CD8-positive, alpha-beta T cell (primary cell): ENCODE measurements at regions of chr4 and their contacts with region 1.

Region 1: DNA sequence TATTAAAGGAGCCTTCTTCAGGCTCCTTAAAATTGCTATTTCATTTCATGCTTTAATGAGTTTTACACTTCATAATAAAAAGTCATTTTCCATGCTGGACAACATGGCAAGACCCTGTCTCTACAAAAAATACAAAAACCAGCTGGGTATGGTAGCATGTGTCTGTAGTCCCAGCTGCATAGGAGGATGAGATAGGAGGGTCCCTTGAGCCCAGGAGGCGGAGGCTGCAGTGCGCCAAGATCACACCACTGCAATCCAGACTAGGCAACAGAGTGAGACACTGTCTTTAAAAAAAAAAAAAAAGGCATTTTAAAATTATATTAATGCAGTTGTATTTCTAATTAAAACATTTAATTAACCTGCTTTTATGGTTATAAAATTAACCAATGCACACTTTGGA is 49.2 kb downstream of the PDS5A start:
- DNase-seq: no peak
- ATAC-seq: no peak
- H3K4me3 ChIP-seq: no peak overlapping the region
- H3K4me3 Mint-ChIP-seq: no peak overlapping the region
- H3K27ac ChIP-seq: no peak overlapping the region
- H3K27ac Mint-ChIP-seq: no peak overlapping the region
- H3K4me1 ChIP-seq: peaks cover 9% of the 10 kb centered on the region
- H3K4me1 Mint-ChIP-seq: peaks cover 46% of the 10 kb centered on the region
- H3K27me3 ChIP-seq: no peaks in the 10 kb centered on the region
- H3K27me3 Mint-ChIP-seq: no peaks in the 10 kb centered on the region
- CTCF ChIP-seq: no peak

Region 2: GRCh38 chr4:39864403-39864802 is 64.1 kb before region 1 on chr4:
- CTCF ChIA-PET with region 1: no interaction called
- POLR2A ChIA-PET with region 1: no interaction called
- intact Hi-C with region 1: no loop called
- DNase-seq: no peak
- ATAC-seq: no peak
- H3K4me3 ChIP-seq: no peak overlapping the region
- H3K4me3 Mint-ChIP-seq: no peak overlapping the region
- H3K27ac ChIP-seq: no peak overlapping the region
- H3K27ac Mint-ChIP-seq: no peak overlapping the region
- H3K4me1 ChIP-seq: no peaks in the 10 kb centered on the region
- H3K4me1 Mint-ChIP-seq: peaks cover 2% of the 10 kb centered on the region
- H3K27me3 ChIP-seq: no peaks in the 10 kb centered on the region
- H3K27me3 Mint-ChIP-seq: no peaks in the 10 kb centered on the region
- CTCF ChIP-seq: no peak

Region 3: GRCh38 chr4:39892988-39893692 is 35.4 kb before region 1 on chr4:
- CTCF ChIA-PET with region 1: no interaction called
- POLR2A ChIA-PET with region 1: interaction called, 3 read pairs
- intact Hi-C with region 1: loop called in 1 of 2 experiments (anchors 5 kb)
- DNase-seq: no peak
- ATAC-seq: no peak
- H3K4me3 ChIP-seq: no peak overlapping the region
- H3K4me3 Mint-ChIP-seq: no peak overlapping the region
- H3K27ac ChIP-seq: no peak overlapping the region
- H3K27ac Mint-ChIP-seq: no peak overlapping the region
- H3K4me1 ChIP-seq: no peaks in the 10 kb centered on the region
- H3K4me1 Mint-ChIP-seq: no peaks in the 10 kb centered on the region
- H3K27me3 ChIP-seq: no peaks in the 10 kb centered on the region
- H3K27me3 Mint-ChIP-seq: no peaks in the 10 kb centered on the region
- CTCF ChIP-seq: no peak